BJ (cell line): ENCODE measurements at regions of chr22 and their contacts with region 1.

Region 1: DNA sequence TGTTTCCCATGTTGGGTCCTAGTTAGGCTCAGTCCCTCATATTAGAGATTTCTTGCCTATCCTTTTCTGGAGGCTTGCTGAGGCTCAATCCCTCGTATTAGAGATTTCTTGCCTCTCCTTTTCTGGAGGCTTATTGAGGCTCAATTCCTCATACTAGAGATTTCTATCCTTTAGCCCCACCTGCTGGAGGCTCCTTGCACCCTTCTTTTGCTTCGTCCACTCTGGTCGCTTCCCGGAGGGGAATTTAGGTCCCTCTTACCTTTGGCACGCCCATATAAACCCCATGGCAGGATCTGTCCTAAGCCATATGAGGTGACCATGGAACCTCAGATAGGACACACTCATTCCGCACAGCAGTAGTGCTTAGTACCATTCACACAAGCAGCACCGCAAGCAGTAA is 15.9 kb downstream of the CYP2D6 start:
- DNase-seq: no peak
- H3K4me3 ChIP-seq: no peak overlapping the region
- H3K27me3 ChIP-seq: peaks cover 1% of the 10 kb centered on the region; the same call in 1 of the 2 replicates
- CTCF ChIP-seq: peak; percentile 42

Region 2: GRCh38 chr22:41966607-41967240 is 148.0 kb before region 1 on chr22:
- CTCF ChIA-PET with region 1: interaction called, 11 read pairs
- POLR2A ChIA-PET with region 1: no interaction called
- DNase-seq: peak; percentile 56
- H3K4me3 ChIP-seq: no peak overlapping the region
- H3K27me3 ChIP-seq: 0 out of 2 replicates have a peak, but pooled peaks cover 1% of the 10 kb centered on the region
- CTCF ChIP-seq: peak; percentile 53

Region 3: DNA sequence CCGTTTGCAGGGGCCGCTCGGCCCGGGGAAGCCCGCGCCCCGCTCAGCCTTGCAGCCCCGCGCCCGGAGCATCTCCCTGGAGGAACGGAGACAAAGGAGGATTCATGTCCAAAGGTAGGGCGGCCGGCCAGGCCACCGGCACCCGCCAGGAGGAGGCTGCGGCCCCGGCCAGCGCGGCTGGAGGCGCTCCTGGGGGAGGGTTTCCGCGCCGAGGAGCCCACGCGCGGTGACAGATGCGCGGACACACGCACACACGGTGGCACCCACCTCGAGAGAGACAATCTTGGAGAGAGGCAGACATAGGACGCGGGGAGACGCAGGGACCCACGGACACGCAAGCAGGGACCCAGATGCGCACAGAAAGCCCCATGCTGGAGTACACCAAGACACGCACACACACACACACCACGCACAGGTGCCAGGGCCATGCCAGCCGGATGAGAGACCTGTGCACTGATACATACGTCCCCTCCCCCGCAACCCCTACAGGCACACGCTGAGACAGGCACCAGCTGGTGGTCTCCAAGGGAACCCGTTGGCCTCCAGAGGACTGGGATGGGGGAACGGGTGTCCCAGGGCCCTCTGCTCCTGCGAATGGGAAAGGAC is 137.7 kb before region 1 on chr22:
- CTCF ChIA-PET with region 1: no interaction called
- POLR2A ChIA-PET with region 1: no interaction called
- DNase-seq: no peak
- H3K4me3 ChIP-seq: peak overlapping the region; percentile 23
- H3K27me3 ChIP-seq: peaks cover 38% of the 10 kb centered on the region
- CTCF ChIP-seq: no peak

Region 4: GRCh38 chr22:42080287-42080686 is 34.4 kb before region 1 on chr22:
- CTCF ChIA-PET with region 1: no interaction called
- POLR2A ChIA-PET with region 1: no interaction called
- DNase-seq: no peak
- H3K4me3 ChIP-seq: peak overlapping the region; percentile 80
- H3K27me3 ChIP-seq: no peaks in the 10 kb centered on the region
- CTCF ChIP-seq: no peak

Region 5: DNA sequence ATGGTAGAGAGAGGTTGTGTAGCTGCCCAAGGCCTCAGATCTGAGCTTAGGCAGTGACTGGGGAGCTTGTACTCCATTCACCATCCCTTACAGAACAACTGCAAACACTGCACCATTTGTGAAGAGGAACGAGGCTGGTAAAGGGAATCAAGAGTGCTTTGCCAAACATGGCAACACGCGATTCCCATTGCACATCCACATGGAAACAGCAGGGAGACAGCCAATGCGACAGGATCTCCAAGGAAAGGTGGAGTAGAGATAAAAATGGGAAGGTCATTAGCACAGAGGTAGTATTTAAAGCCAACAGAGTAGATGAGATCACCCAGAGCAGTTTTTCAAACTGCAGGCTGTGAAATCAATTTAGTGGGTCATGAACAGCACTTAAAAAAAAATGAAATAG is 113.8 kb after region 1 on chr22:
- CTCF ChIA-PET with region 1: no interaction called
- POLR2A ChIA-PET with region 1: no interaction called
- DNase-seq: no peak
- H3K4me3 ChIP-seq: no peak overlapping the region
- H3K27me3 ChIP-seq: no peaks in the 10 kb centered on the region
- CTCF ChIP-seq: no peak

Region 6: DNA sequence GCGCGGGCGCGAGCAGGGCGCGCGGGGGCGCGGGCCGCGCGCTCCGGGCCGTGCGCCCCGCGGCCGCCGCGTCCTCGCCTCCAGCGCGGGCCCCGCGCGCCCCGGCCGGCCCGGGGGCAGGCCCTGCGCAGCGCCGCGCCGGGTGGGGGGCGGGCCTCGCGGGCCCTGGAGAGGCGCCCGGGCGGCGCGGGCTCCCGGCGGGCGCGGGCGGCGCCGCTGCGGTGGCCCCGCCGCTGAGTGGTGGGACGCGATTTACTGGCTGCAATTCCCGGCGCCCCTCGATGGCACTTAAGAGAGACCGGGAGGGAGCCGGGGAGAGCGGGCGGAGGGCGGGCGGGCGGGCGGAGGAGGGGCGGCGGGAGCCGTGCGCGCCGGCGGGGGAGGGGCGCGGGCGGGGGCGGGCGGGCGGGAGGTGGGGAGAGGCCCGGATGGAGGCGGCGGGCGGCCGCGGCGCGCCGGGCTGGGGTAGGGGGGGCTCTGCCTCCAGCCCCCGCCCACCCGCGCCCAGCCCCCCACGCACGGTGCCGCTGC is 228.9 kb after region 1 on chr22:
- CTCF ChIA-PET with region 1: no interaction called
- POLR2A ChIA-PET with region 1: no interaction called
- DNase-seq: no peak
- H3K4me3 ChIP-seq: peak overlapping the region; percentile 49
- H3K27me3 ChIP-seq: no peaks in the 10 kb centered on the region
- CTCF ChIP-seq: no peak